Ascending aorta (tissue), 2 donors: ENCODE measurements at regions of chr1 and their contacts with region 1.

Region 1: DNA sequence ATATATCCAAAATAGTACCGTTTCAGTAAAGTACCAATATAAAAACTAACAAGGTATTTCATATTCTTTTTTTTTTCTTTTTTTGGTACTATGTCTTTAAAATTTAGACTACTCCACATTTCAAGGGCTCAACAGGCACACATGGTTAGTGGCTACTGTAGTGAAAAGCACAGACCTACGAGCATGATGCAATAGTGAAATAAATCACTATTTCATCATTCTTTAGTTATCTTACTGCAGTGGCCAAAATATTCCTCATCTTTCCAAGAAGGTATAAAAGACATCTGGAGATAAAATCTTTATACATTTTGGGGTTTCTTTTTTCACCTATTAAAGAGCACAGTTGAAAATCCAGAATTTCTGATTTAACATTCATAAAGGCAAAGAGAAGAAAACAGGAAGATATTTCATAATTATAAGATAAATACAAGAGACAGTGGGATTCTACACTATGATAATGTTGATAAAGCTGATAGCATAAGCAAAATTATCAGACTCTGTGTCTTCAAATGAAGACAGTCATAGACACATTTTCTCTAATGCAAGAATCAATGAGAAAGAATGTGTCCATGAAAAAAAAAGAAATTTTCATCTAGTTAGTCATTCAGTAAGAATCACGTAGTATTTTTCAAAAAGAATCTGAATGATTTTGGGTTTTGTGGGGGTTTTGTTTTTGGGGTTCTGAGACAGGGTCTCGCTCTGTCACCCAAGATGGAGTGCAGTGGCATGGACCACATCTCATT is 41.9 kb downstream of the CEP170 start:
- DNase-seq: no peak
- H3K4me3 ChIP-seq: no peak overlapping the region
- H3K27ac ChIP-seq: no peak overlapping the region
- H3K4me1 ChIP-seq: peaks cover 0 to 4% of the 10 kb centered on the region in 2 donors
- H3K27me3 ChIP-seq: no peaks in the 10 kb centered on the region
- CTCF ChIP-seq: no peak

Region 2: GRCh38 chr1:243255791-243256512 is 42.7 kb after region 1 on chr1 and contains the start of gene SDCCAG8:
- intact Hi-C with region 1: loop called (anchors 10 kb)
- DNase-seq: peak; percentile 98 to 100
- H3K4me3 ChIP-seq: peak within 1 kb of the TSS; percentile 84 to 99
- H3K27ac ChIP-seq: peak within 1 kb of the TSS; percentile 97 to 99
- H3K4me1 ChIP-seq: peaks cover 3 to 22% of the 10 kb centered on the region in 2 donors
- H3K27me3 ChIP-seq: no peaks in the 10 kb centered on the region
- CTCF ChIP-seq: no peak
- total RNA-seq, gene SDCCAG8: 97.1 TPM